Activated CD4-positive, alpha-beta T cell treated with anti-CD3 and anti-CD28 coated beads for 36 hours (primary cell): ENCODE measurements at regions of chr1 and their contacts with region 1.

Region 1: DNA sequence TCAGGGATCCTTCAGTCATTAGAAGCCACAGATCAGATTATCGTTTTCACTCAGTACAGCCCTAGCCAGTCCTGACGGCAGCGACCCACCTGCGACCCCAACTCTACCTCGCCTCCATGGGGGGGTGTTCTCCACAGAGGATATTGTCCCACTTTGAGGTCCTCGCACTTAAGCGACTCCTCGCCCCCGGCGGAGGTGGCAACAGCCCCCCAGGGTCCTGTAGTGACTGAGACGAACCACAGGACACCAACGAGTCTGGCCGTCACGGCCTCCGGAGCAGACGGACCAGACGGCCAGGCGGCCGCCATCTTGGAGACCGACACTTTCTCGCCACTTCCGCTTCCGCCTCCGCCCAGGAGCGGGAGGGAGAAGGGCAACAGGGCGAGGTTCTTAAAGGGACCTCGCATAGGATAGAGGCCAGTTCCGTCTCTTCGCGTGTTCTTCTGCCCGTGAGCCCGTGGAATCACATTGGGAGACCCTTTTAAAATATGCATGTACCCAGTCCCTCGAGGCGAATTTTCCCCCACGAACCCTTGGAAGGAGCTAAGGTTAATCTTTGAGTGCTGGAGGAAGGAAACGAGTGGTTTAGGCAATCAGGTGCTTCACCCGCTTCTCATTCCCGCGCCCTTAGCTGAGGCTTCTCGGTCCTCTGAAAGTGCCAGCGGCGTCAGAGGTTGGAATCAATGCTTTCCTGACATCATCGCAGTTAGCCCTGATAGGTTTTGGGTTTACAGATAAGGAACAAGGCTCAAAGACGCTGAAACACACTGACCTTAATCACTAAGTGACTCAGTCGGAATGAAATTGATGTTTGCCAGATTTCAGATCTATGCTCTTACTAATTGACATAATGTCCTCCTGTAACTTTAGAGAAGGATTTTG is at the start of gene TM2D1:
- DNase-seq: peak; percentile 92
- ATAC-seq: peak; percentile 93
- H3K4me3 Mint-ChIP-seq: peak within 1 kb of the TSS; percentile 97
- H3K27ac Mint-ChIP-seq: peak within 1 kb of the TSS; percentile 98
- H3K4me1 Mint-ChIP-seq: peaks cover 17% of the 10 kb centered on the region
- H3K27me3 Mint-ChIP-seq: no peaks in the 10 kb centered on the region
- total RNA-seq, gene TM2D1: 20.8 to 26.4 TPM

Region 2: GRCh38 chr1:60185684-60186083 is 1539.4 kb before region 1 on chr1:
- CTCF ChIA-PET with region 1: no interaction called
- POLR2A ChIA-PET with region 1: no interaction called
- intact Hi-C with region 1: no loop called
- DNase-seq: no peak
- ATAC-seq: no peak
- H3K4me3 Mint-ChIP-seq: no peak overlapping the region
- H3K27ac Mint-ChIP-seq: no peak overlapping the region
- H3K4me1 Mint-ChIP-seq: no peaks in the 10 kb centered on the region
- H3K27me3 Mint-ChIP-seq: no peaks in the 10 kb centered on the region

Region 3: DNA sequence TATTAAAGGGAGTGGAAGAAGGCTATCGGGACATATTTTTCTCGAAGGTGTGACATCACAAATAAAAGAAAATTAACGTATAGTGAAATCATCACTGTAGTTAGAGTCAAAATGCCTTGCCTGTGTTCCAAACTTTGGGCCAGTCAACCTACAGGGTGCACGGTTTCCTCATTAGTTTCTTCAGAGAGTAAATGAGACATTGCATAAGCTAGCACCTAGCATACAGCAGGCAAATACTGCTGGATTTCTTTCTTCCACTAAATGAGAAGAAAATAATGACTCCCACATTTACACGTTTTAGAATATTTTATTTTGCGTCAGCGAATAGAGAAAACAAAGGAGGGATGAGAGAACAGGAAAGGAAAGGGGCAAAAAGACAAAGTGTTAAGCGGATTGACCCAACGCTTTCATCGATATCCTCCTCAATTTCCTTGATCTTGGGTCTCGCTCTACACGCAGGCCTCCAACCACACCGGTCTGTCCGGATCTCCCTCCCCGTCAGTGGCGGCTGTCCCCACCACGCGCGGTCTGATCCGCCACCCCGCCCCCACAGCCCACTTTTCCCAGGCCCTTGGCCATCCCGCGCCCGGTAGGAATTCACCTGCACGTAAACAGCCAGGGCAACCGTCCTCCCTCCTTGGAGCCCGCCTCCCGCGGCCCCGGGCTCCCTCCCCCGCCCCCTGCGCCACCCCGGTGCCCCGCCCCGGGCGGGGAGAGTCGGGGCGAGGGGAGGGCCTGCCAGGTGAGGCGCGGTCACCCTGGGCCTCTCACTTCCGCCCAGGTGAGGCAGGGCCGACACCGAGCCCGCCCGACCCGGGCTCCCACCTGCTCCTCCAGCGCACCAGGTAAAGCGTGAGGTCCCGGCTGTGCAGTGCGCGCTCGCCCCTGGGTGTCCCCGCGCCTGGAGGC is 16.9 kb after region 1 on chr1 and contains the start of gene PATJ:
- CTCF ChIA-PET with region 1: interaction called, 3 read pairs
- POLR2A ChIA-PET with region 1: interaction called, 4 read pairs
- intact Hi-C with region 1: loop called (anchors 1 kb)
- DNase-seq: peak; percentile 77
- ATAC-seq: peak; percentile 85
- H3K4me3 Mint-ChIP-seq: peak within 1 kb of the TSS; percentile 86
- H3K27ac Mint-ChIP-seq: peak within 1 kb of the TSS; percentile 92
- H3K4me1 Mint-ChIP-seq: peaks cover 24% of the 10 kb centered on the region
- H3K27me3 Mint-ChIP-seq: no peaks in the 10 kb centered on the region
- total RNA-seq, gene PATJ: 12.6 to 12.8 TPM

Region 4: GRCh38 chr1:61782771-61783170 is 57.7 kb after region 1 on chr1:
- CTCF ChIA-PET with region 1: no interaction called
- POLR2A ChIA-PET with region 1: no interaction called
- intact Hi-C with region 1: loop called (anchors 1 to 2 kb)
- DNase-seq: peak; percentile 79
- ATAC-seq: peak; percentile 94
- H3K4me3 Mint-ChIP-seq: peak overlapping the region; percentile 2
- H3K27ac Mint-ChIP-seq: peak overlapping the region; percentile 65
- H3K4me1 Mint-ChIP-seq: peaks cover 49% of the 10 kb centered on the region
- H3K27me3 Mint-ChIP-seq: no peaks in the 10 kb centered on the region

Region 5: DNA sequence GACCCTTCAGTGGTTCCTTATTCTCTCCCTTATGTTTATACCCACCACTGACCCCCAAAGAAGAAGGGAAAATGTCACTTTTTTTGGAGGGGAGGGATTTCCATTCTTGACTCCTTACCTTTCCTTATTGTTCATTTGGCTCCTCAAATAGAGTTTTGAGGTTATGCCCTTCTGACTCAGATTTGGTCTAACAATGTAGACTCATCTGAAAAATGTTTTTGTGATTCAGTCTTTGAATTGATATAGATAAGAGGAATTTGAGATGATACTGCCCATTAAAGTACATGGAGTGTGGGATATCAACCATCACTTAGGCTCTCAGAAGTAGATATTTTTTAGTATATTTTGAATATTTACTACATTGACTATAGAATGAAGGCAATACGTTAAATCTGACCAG is 727.9 kb after region 1 on chr1:
- CTCF ChIA-PET with region 1: no interaction called
- POLR2A ChIA-PET with region 1: no interaction called
- intact Hi-C with region 1: no loop called
- DNase-seq: no peak
- ATAC-seq: peak; percentile 26
- H3K4me3 Mint-ChIP-seq: no peak overlapping the region
- H3K27ac Mint-ChIP-seq: peak overlapping the region; percentile 5
- H3K4me1 Mint-ChIP-seq: peaks cover 11% of the 10 kb centered on the region
- H3K27me3 Mint-ChIP-seq: no peaks in the 10 kb centered on the region

Region 6: GRCh38 chr1:62687903-62688686 is 963.0 kb after region 1 on chr1 and contains the start of gene DOCK7:
- CTCF ChIA-PET with region 1: no interaction called
- POLR2A ChIA-PET with region 1: no interaction called
- intact Hi-C with region 1: loop called in 1 of 2 experiments (anchors 10 kb)
- DNase-seq: peak; percentile 69
- ATAC-seq: peak; percentile 64
- H3K4me3 Mint-ChIP-seq: peak within 1 kb of the TSS; percentile 88
- H3K27ac Mint-ChIP-seq: peak within 1 kb of the TSS; percentile 87
- H3K4me1 Mint-ChIP-seq: peaks cover 30% of the 10 kb centered on the region
- H3K27me3 Mint-ChIP-seq: no peaks in the 10 kb centered on the region
- total RNA-seq, gene DOCK7: 11.9 to 13.7 TPM